ENCODE measurements at regions of chr2 and their contacts with region 1.

Region 1: DNA sequence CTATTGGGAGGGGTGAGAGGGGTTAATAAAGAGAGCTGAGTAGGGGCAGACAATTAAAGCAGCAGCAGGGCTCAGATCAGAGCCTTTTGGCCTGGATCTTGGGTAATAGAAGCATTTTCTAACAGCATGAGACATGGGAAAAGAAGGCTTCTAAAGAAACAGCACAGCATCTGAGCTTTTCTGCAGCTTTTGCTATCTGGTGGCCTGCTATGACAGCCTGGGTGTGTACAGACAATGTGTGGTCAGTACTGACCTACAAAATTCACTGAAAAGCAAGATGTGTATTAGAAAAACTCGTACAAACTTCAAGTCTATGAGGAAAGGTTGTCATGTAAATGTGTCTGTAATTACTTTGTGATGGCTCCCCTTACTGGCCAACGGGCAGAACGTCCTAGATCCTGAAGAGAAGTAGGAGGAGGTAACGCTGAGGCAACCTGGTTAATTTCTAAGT is 95.6 kb downstream of the GALNT3 start:
- DNase-seq: peak; percentile 80
- ATAC-seq: peak; percentile 96
- H3K4me3 ChIP-seq: no peak overlapping the region
- H3K27ac ChIP-seq: no peak overlapping the region
- H3K4me1 ChIP-seq: no peaks in the 10 kb centered on the region
- H3K27me3 ChIP-seq: 0 out of 2 replicates have a peak, but pooled peaks cover 3% of the 10 kb centered on the region
- CTCF ChIP-seq: peak; percentile 79

Region 2: DNA sequence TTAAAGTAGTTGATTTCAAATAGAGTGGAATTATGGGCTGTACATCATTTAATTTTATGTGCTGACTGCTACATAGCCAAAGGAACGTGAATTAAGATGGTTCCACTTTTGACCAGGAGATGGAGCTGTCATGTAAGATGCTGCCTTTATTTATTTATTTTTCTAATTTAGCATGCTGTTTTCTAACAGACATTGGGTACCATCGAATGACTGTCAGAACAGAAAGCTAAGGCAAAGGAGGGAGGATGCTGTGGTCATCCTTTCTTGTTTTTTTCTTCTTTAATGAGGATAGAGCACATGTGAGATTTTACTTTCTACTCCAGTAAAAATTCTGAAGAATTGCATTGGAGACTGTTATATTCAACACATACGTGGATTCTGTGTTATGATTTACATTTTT is 459.2 kb before region 1 on chr2 and contains the start of gene SCN2A:
- CTCF ChIA-PET with region 1: no interaction called
- POLR2A ChIA-PET with region 1: no interaction called
- intact Hi-C with region 1: loop called (anchors 1 kb)
- DNase-seq: peak; percentile 67
- ATAC-seq: peak; percentile 37
- H3K4me3 ChIP-seq: no peak within 1 kb of the TSS
- H3K27ac ChIP-seq: no peak within 1 kb of the TSS
- H3K4me1 ChIP-seq: no peaks in the 10 kb centered on the region
- H3K27me3 ChIP-seq: no peaks in the 10 kb centered on the region
- CTCF ChIP-seq: peak; percentile 74
- total RNA-seq, gene SCN2A: 0.07 and 0.46 TPM in 2 replicates

Region 3: GRCh38 chr2:165469417-165469816 is 229.1 kb before region 1 on chr2 and contains the start of gene CSRNP3:
- CTCF ChIA-PET with region 1: no interaction called
- POLR2A ChIA-PET with region 1: no interaction called
- intact Hi-C with region 1: loop called (anchors 10 kb)
- DNase-seq: peak; percentile 97
- ATAC-seq: peak; percentile 100
- H3K4me3 ChIP-seq: peak within 1 kb of the TSS; percentile 73
- H3K27ac ChIP-seq: no peak within 1 kb of the TSS
- H3K4me1 ChIP-seq: peaks cover 24% of the 10 kb centered on the region; the same call in 1 of the 2 replicates
- H3K27me3 ChIP-seq: no peaks in the 10 kb centered on the region
- CTCF ChIP-seq: no peak
- total RNA-seq, gene CSRNP3: 2.2 and 8.3 TPM in 2 replicates

Region 4: GRCh38 chr2:165529130-165529529 is 169.3 kb before region 1 on chr2:
- CTCF ChIA-PET with region 1: no interaction called
- POLR2A ChIA-PET with region 1: no interaction called
- intact Hi-C with region 1: no loop called
- DNase-seq: no peak
- ATAC-seq: no peak
- H3K4me3 ChIP-seq: no peak overlapping the region
- H3K27ac ChIP-seq: no peak overlapping the region
- H3K4me1 ChIP-seq: no peaks in the 10 kb centered on the region
- H3K27me3 ChIP-seq: no peaks in the 10 kb centered on the region
- CTCF ChIP-seq: no peak

Region 5: DNA sequence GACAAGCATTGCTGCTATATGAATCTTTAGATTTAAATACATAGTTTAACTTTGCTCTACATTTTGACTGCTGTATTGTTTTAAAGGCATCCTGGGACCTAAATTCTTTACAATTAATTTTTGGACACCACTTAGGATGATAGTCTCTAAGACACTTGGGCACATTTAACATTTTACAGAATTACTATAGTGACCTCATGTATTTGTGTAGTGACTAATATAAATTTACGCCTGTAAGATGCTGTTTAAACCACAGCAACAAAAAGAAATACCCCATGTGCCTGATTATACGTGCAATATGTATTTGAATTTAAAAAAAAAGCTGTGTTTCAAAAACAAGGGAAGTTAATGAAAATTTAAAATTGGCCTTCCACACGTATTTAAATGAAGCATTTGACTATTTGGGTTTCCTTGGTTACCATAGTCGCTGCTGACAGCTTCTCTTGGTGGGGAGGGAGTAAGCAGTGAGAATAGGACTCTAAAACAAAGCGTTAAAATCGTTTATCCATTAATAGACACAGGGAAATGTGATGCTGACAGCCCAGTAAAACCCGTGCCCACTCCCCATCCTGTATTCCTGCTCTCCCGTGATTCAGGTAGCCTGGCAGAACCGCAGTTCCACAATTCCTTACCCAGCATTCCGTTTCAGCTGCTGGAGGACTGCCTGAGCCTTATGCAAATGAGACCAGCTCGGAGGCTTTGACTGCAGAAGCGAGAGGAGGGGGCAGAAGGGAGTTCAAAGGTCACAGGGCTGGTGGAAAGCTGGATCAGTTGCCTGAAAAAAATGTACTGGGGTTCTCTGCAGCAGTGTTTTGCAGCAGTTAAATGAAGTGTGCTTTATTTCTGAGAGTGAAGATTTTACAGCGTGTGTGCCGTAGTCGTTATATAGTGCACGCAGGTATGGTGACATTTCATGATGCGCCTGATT is 124.7 kb before region 1 on chr2:
- CTCF ChIA-PET with region 1: no interaction called
- POLR2A ChIA-PET with region 1: no interaction called
- intact Hi-C with region 1: loop called (anchors 5 kb)
- DNase-seq: peak; percentile 62
- ATAC-seq: peak; percentile 92
- H3K4me3 ChIP-seq: peak overlapping the region; percentile 67
- H3K27ac ChIP-seq: peak overlapping the region; percentile 26
- H3K4me1 ChIP-seq: peaks cover 14% of the 10 kb centered on the region
- H3K27me3 ChIP-seq: no peaks in the 10 kb centered on the region
- CTCF ChIP-seq: no peak